ENCODE measurements at regions of chr7 and their contacts with region 1.

Region 1: GRCh38 chr7:128455551-128456254 is at the start of gene HILPDA:
- DNase-seq: peak; percentile 95
- ATAC-seq: peak; percentile 91
- H3K4me3 Mint-ChIP-seq: peak within 1 kb of the TSS; percentile 89
- H3K27ac Mint-ChIP-seq: peak within 1 kb of the TSS; percentile 93
- H3K4me1 Mint-ChIP-seq: peaks cover 55% of the 10 kb centered on the region
- H3K27me3 Mint-ChIP-seq: peaks cover 7% of the 10 kb centered on the region
- total RNA-seq, gene HILPDA: 24.1 to 26.2 TPM

Region 2: GRCh38 chr7:128373606-128374005 is 82.1 kb before region 1 on chr7:
- CTCF ChIA-PET with region 1: no interaction called
- POLR2A ChIA-PET with region 1: no interaction called
- DNase-seq: no peak
- ATAC-seq: no peak
- H3K4me3 Mint-ChIP-seq: no peak overlapping the region
- H3K27ac Mint-ChIP-seq: no peak overlapping the region
- H3K4me1 Mint-ChIP-seq: no peaks in the 10 kb centered on the region
- H3K27me3 Mint-ChIP-seq: peaks cover 20% of the 10 kb centered on the region

Region 3: GRCh38 chr7:128387216-128388144 is 68.2 kb before region 1 on chr7:
- CTCF ChIA-PET with region 1: interaction called, 20 read pairs
- POLR2A ChIA-PET with region 1: no interaction called
- DNase-seq: peak; percentile 78
- ATAC-seq: peak; percentile 84
- H3K4me3 Mint-ChIP-seq: no peak overlapping the region
- H3K27ac Mint-ChIP-seq: no peak overlapping the region
- H3K4me1 Mint-ChIP-seq: peaks cover 2% of the 10 kb centered on the region
- H3K27me3 Mint-ChIP-seq: peaks cover 4% of the 10 kb centered on the region

Region 4: DNA sequence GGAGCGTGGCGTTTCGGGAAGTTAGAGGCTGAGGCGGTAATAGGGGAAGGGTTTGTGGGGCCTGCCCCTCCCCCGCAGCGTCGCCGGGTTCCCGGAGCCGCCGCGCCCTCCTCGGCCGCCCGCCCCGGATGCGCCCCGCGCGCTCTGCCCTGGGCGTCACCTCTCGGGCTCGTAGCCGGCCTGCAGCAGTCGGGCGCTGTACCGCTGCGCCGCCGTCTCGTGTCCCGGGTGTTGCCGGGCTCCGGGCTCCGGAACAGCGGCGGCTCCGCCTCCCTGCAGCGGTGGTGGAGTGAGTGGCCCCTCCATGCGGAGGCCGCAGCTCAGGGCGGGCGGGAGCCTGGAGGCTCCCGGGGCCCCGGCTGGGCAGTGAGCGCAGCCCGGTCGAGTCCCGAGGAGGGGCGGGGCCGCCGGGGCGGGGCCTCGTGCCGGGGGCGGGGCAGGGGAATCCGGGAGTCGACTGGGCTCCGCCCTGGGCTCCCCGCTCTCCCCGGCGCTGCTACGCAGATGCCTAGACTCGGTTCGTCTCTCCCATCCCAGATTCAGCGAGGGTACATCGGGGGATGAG is 46.0 kb before region 1 on chr7 and contains the start of gene IMPDH1:
- CTCF ChIA-PET with region 1: interaction called, 31 read pairs
- POLR2A ChIA-PET with region 1: interaction called, 3 read pairs
- DNase-seq: peak; percentile 87
- ATAC-seq: peak; percentile 88
- H3K4me3 Mint-ChIP-seq: peak within 1 kb of the TSS; percentile 88
- H3K27ac Mint-ChIP-seq: peak within 1 kb of the TSS; percentile 77
- H3K4me1 Mint-ChIP-seq: peaks cover 31% of the 10 kb centered on the region
- H3K27me3 Mint-ChIP-seq: peaks cover 21% of the 10 kb centered on the region
- total RNA-seq, gene IMPDH1: 75.3 to 80.8 TPM

Region 5: DNA sequence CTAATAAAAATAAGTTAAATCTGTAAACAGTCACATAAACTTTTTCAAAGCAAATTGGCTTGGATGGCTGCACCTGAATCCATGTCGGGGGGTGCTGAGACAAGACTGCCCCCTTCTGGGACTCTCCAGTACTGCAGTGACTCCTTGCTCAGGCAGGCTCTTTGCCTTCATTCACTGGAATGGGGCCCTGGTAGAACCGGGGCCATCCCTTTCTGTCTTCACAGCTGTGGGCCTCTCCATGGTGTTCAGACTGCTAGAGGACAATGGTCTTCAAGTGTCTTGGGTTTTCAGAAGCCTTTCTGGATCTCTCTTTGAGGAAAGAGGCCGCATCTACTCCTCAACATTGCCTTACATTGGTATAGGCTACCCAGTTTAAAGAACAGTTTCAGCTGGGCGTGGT is 29.9 kb before region 1 on chr7:
- CTCF ChIA-PET with region 1: interaction called, 350 read pairs
- POLR2A ChIA-PET with region 1: interaction called, 8 read pairs
- DNase-seq: peak; percentile 87
- ATAC-seq: peak; percentile 78
- H3K4me3 Mint-ChIP-seq: no peak overlapping the region
- H3K27ac Mint-ChIP-seq: no peak overlapping the region
- H3K4me1 Mint-ChIP-seq: peaks cover 12% of the 10 kb centered on the region
- H3K27me3 Mint-ChIP-seq: peaks cover 5% of the 10 kb centered on the region

Region 6: DNA sequence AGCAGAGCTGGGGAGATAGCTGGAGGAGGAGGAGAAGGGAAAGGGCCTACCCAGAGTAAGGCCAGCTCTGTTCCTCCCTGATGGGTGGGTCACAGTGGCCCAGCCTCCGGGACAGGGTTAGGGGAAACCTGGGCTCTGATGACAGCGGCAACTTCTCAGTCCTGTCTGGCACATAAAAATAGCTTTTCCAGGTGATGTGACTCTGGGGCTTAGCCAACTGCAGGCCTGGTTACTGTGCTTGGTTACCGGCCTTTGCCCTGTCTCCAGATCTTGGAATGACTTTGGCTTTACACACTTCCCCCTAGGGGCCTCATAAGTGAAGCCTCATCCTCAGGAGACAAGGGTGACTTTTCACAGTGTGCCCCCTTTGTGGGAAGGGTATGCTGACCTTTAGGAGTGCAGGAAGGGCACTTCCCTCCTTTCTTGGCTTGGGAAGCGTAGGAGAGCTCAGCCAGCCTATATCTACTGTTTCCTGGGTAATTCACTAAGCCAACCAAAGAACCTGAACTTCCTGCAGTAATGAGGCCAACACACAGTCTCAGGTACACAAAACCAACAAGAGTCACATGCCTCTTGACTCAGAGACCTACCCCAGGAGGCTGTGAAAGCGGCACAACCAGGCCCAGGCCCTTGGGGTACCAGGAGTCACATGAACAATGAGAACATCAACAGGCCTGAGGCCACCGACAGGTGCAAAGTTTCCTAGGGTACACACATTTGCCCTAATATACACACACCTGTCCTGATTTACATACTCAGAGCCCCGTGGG is 11.7 kb before region 1 on chr7:
- CTCF ChIA-PET with region 1: interaction called, 34 read pairs
- POLR2A ChIA-PET with region 1: interaction called, 4 read pairs
- DNase-seq: no peak
- ATAC-seq: no peak
- H3K4me3 Mint-ChIP-seq: no peak overlapping the region
- H3K27ac Mint-ChIP-seq: no peak overlapping the region
- H3K4me1 Mint-ChIP-seq: peaks cover 7% of the 10 kb centered on the region
- H3K27me3 Mint-ChIP-seq: peaks cover 6% of the 10 kb centered on the region